SK-N-SH (cell line): ENCODE measurements at regions of chr13 and their contacts with region 1.

Region 1: DNA sequence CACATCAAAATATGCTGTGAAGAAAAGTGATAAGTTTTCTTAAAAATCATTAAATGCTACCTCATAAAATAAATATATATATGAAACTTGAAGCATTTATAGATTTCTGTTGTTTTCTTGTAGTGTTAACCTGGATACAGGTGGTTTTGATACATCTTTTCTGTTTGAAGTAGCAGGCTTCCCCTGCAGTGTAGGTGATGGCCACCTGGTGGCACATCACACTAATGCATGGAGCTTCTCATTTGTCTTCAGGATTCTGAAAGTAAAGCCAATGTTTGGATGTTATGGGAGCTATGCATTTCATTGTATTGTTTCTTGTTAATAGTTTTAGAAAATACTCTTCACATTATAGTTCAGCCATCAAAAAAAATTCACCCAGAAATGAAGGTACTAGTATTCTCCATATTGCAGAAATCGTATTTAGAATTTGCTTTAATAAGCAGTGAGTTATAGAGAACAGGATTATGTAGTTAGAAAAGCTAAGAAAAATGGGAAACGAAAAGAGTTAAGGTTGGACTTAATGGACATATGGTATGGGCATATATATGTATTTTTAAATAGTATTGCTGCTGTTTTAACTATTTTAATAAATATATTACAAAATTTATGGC is 18.7 kb downstream of the GPR180 start:
- DNase-seq: peak; percentile 49
- H3K4me3 ChIP-seq: no peak overlapping the region
- H3K27ac ChIP-seq: no peak overlapping the region
- H3K4me1 ChIP-seq: no peaks in the 10 kb centered on the region; a peak in 1 of 4 replicates
- H3K27me3 ChIP-seq: no peaks in the 10 kb centered on the region
- CTCF ChIP-seq: peak; percentile 79
- EP300 ChIP-seq: no peak
- RAD21 ChIP-seq: peak; percentile 80

Region 2: GRCh38 chr13:94192431-94192975 is 427.9 kb before region 1 on chr13:
- CTCF ChIA-PET with region 1: no interaction called
- POLR2A ChIA-PET with region 1: no interaction called
- DNase-seq: no peak
- H3K4me3 ChIP-seq: no peak overlapping the region; a peak in 1 of 4 replicates
- H3K27ac ChIP-seq: no peak overlapping the region
- H3K4me1 ChIP-seq: peaks cover 6 to 7% of the 10 kb centered on the region in 2 experiments; a peak in 2 of 4 replicates
- H3K27me3 ChIP-seq: no peaks in the 10 kb centered on the region
- CTCF ChIP-seq: peak; percentile 54
- EP300 ChIP-seq: no peak
- RAD21 ChIP-seq: peak; percentile 62

Region 3: GRCh38 chr13:94435604-94436226 is 184.7 kb before region 1 on chr13:
- CTCF ChIA-PET with region 1: interaction called, 307 read pairs
- POLR2A ChIA-PET with region 1: interaction called, 4 read pairs
- DNase-seq: peak; percentile 60
- H3K4me3 ChIP-seq: no peak overlapping the region; a peak in 1 of 4 replicates
- H3K27ac ChIP-seq: no peak overlapping the region
- H3K4me1 ChIP-seq: no peaks in the 10 kb centered on the region; a peak in 1 of 4 replicates
- H3K27me3 ChIP-seq: no peaks in the 10 kb centered on the region; the same call in 1 of the 2 replicates
- CTCF ChIP-seq: peak; percentile 74
- EP300 ChIP-seq: no peak
- RAD21 ChIP-seq: peak; percentile 88

Region 4: GRCh38 chr13:94549232-94550061 is 70.9 kb before region 1 on chr13:
- CTCF ChIA-PET with region 1: interaction called, 10 read pairs
- POLR2A ChIA-PET with region 1: no interaction called
- DNase-seq: peak; percentile 93
- H3K4me3 ChIP-seq: peak overlapping the region; percentile 69 to 81
- H3K27ac ChIP-seq: peak overlapping the region; percentile 83 to 98
- H3K4me1 ChIP-seq: peaks cover 5 to 12% of the 10 kb centered on the region in 2 experiments; a peak in 2 of 4 replicates
- H3K27me3 ChIP-seq: no peaks in the 10 kb centered on the region
- CTCF ChIP-seq: no peak
- EP300 ChIP-seq: no peak; a peak in 1 of 4 replicates
- RAD21 ChIP-seq: no peak

Region 5: GRCh38 chr13:94601446-94602431 is 18.7 kb before region 1 on chr13 and contains the start of gene GPR180:
- CTCF ChIA-PET with region 1: interaction called, 23 read pairs
- POLR2A ChIA-PET with region 1: no interaction called
- DNase-seq: peak; percentile 96
- H3K4me3 ChIP-seq: peak within 1 kb of the TSS; percentile 87 to 100
- H3K27ac ChIP-seq: peak within 1 kb of the TSS; percentile 59 to 86
- H3K4me1 ChIP-seq: peaks cover 0 to 6% of the 10 kb centered on the region in 2 experiments; a peak in 2 of 4 replicates
- H3K27me3 ChIP-seq: no peaks in the 10 kb centered on the region
- CTCF ChIP-seq: no peak
- EP300 ChIP-seq: 0 out of 4 replicates have a peak, but pooled peaks of 1 of the 2 experiments have one; percentile 22
- RAD21 ChIP-seq: no peak
- polyA plus RNA-seq, gene GPR180: 1.8 and 2.2 TPM in 2 replicates

Region 6: DNA sequence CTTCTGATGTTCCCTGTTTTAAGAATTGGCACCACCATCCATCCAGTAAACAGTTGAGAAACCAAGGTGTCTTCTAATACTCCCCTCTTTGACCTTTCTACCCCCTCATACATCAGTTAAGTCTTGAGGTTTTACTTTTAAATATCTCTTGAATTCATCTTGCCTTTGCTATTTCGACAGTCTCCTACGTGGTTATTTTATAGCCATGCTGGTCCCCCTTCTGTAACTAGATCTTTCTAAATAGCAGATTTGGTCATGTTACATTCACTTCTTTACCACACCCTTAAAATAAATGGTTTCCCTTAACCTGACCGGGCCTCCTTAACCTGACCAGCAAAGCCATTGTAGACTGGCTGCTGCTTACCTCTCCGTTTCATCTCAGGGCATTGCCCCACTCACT is 13.3 kb before region 1 on chr13:
- CTCF ChIA-PET with region 1: interaction called, 23 read pairs
- POLR2A ChIA-PET with region 1: no interaction called
- DNase-seq: no peak
- H3K4me3 ChIP-seq: no peak overlapping the region
- H3K27ac ChIP-seq: no peak overlapping the region
- H3K4me1 ChIP-seq: peaks cover 0 to 6% of the 10 kb centered on the region in 2 experiments; a peak in 2 of 4 replicates
- H3K27me3 ChIP-seq: no peaks in the 10 kb centered on the region
- CTCF ChIP-seq: no peak
- EP300 ChIP-seq: no peak
- RAD21 ChIP-seq: no peak

Region 7: DNA sequence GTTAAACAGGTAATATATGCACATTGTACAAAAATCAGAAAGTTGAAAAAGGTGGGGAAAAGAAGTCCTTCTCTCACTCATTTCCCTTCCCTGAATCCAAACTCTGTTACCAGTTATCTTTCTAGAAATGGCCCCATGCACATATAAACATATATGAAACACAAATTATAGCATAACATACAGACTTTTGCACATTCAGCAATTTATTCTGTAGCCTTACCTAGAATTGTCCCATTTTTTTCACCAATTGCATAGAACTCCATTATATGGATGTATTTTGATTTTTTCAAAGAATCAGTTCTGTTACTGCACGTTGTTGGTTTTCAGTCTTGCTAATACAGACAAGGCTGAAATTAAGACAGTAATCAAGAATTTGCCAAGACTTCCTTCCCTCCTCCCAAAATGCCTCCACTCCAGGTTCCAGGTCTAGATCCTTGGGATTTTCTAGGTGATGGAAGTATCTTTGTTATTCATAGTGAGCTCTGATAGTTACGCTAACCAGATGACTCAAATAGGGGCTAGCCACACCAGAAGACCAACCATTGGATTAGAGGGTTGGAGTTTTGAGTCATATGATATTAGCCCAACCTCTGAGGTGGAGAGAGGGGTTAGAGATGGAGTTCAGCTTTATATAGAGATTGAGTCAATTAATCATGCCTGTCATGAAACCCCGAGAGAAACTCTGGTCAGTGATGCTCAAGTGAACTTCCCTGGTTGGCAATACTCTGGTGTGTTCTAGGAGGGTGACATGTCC is 12.0 kb after region 1 on chr13:
- CTCF ChIA-PET with region 1: interaction called, 23 read pairs
- POLR2A ChIA-PET with region 1: no interaction called
- DNase-seq: no peak
- H3K4me3 ChIP-seq: no peak overlapping the region
- H3K27ac ChIP-seq: no peak overlapping the region
- H3K4me1 ChIP-seq: no peaks in the 10 kb centered on the region
- H3K27me3 ChIP-seq: no peaks in the 10 kb centered on the region
- CTCF ChIP-seq: no peak
- EP300 ChIP-seq: no peak
- RAD21 ChIP-seq: no peak

Region 8: DNA sequence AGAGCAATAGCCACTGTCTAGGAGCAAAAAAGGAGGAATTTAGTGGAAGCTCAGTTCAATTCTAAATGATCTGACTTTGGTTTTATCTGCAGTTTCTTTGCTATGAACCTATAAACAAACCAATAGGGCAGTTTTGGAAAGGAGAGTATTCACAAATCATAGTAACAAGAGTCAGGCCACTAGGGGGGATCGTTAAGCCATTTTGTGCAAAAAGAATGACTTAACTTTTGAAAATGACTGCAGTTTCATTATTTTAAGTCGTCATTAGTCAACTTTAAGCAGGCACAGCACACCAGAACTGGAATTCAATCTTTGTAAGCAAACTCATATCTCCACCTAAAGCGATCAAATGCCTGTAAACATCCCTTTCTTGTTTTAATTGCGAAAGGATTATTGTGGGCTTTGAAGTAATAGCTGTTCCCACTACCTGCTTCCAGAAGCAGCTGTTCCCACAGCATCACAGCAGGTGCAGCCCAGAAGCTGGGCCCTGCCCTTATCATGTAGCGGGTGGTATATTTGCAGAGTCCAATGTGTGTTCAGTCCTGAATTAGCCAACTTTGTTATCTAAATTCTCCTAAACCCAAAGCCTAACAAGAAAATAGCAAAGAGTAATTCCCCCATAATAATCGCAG is 40.4 kb after region 1 on chr13:
- CTCF ChIA-PET with region 1: interaction called, 15 read pairs
- POLR2A ChIA-PET with region 1: no interaction called
- DNase-seq: peak; percentile 13
- H3K4me3 ChIP-seq: no peak overlapping the region
- H3K27ac ChIP-seq: no peak overlapping the region
- H3K4me1 ChIP-seq: peaks cover 0 to 5% of the 10 kb centered on the region in 2 experiments; a peak in 2 of 4 replicates
- H3K27me3 ChIP-seq: peaks cover 21% of the 10 kb centered on the region; the same call in 1 of the 2 replicates
- CTCF ChIP-seq: peak; percentile 48
- EP300 ChIP-seq: no peak
- RAD21 ChIP-seq: peak; percentile 54